Heart left ventricle (tissue), 16 donors: ENCODE measurements at regions of chr11 and their contacts with region 1.

Region 1: GRCh38 chr11:132028380-132029240 is 658.2 kb downstream of the NTM start:
- DNase-seq: peak in 1 of 5 donors; percentile 56
- ATAC-seq: peak in 1 of 4 donors; percentile 83
- H3K4me3 ChIP-seq: no peak overlapping the region
- H3K27ac ChIP-seq: no peak overlapping the region
- H3K4me1 ChIP-seq: peaks cover 0 to 11% (median 2%) of the 10 kb centered on the region in 12 donors
- H3K27me3 ChIP-seq: no peaks in the 10 kb centered on the region
- CTCF ChIP-seq: peak in 9 of 12 donors; percentile 23 to 63 (median 44)
- POLR2A ChIP-seq: no peak

Region 2: GRCh38 chr11:131724436-131724975 is 304.1 kb before region 1 on chr11:
- intact Hi-C with region 1: no loop called
- DNase-seq: no peak
- ATAC-seq: no peak
- H3K4me3 ChIP-seq: no peak overlapping the region
- H3K27ac ChIP-seq: no peak overlapping the region
- H3K4me1 ChIP-seq: no peaks in the 10 kb centered on the region
- H3K27me3 ChIP-seq: peaks cover 0 to 6% (median 0%) of the 10 kb centered on the region in 9 donors
- CTCF ChIP-seq: no peak
- POLR2A ChIP-seq: no peak

Region 3: DNA sequence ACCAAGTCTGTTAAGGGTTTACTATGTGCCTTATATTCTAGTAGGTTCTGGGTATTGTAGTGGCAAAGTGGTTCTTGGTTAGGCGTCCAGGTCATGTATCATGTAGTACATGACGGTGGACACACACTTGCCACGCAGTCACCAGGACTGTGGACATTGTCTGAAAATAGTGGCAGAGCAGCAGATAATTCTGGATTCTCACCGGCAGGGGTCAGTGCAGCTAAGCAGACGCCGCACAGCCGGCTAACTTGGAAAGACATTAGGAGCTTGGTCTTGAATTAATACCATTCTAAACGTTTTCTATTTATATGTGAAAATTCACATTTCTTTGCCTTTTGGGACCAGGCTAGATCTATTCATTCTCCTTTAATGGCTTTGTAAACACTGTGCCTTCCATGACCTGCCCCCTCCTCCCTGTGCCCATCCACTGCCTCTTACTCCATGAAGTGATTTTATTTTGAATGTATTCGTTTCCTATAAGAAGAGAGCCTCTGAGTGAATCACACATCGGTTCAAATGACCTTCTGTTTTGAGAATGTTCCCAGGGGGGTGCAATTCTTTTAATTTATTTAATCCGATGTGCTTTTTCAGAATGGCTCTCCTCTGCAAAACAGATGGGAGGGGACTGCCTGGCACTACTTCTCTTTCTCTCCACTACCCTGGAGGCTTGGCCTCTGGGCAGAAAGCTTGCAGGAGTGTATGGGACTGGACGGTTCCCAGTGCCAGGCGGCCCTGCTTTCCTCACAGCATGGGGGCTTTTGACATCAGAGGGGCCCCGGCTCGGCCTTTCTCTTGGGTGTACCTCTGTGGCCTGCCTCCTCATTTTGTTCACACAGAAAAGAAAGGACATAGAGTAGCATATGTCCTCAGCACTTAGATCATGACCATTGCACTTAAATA is 280.2 kb before region 1 on chr11:
- intact Hi-C with region 1: loop called in 1 of 10 experiments (anchors 5 kb)
- DNase-seq: peak in 3 of 5 donors; percentile 34 to 56 (median 45)
- ATAC-seq: peak in 3 of 4 donors; percentile 74 to 90 (median 75)
- H3K4me3 ChIP-seq: no peak overlapping the region
- H3K27ac ChIP-seq: no peak overlapping the region
- H3K4me1 ChIP-seq: peaks cover 0 to 14% (median 0%) of the 10 kb centered on the region in 12 donors
- H3K27me3 ChIP-seq: peaks cover 0 to 26% (median 0%) of the 10 kb centered on the region in 9 donors
- CTCF ChIP-seq: peak; percentile 58 to 85 (median 73)
- POLR2A ChIP-seq: no peak

Region 4: GRCh38 chr11:131874070-131874469 is 154.5 kb before region 1 on chr11:
- intact Hi-C with region 1: loop called in 4 of 10 experiments (anchors 2 to 10 kb)
- DNase-seq: no peak
- ATAC-seq: no peak
- H3K4me3 ChIP-seq: no peak overlapping the region
- H3K27ac ChIP-seq: no peak overlapping the region
- H3K4me1 ChIP-seq: no peaks in the 10 kb centered on the region
- H3K27me3 ChIP-seq: peaks cover 0 to 1% (median 0%) of the 10 kb centered on the region in 9 donors
- CTCF ChIP-seq: no peak
- POLR2A ChIP-seq: no peak

Region 5: GRCh38 chr11:131980888-131981668 is 47.5 kb before region 1 on chr11:
- intact Hi-C with region 1: no loop called
- DNase-seq: no peak
- ATAC-seq: no peak
- H3K4me3 ChIP-seq: no peak overlapping the region
- H3K27ac ChIP-seq: no peak overlapping the region
- H3K4me1 ChIP-seq: no peaks in the 10 kb centered on the region
- H3K27me3 ChIP-seq: peaks cover 0 to 8% (median 0%) of the 10 kb centered on the region in 9 donors
- CTCF ChIP-seq: no peak
- POLR2A ChIP-seq: no peak

Region 6: DNA sequence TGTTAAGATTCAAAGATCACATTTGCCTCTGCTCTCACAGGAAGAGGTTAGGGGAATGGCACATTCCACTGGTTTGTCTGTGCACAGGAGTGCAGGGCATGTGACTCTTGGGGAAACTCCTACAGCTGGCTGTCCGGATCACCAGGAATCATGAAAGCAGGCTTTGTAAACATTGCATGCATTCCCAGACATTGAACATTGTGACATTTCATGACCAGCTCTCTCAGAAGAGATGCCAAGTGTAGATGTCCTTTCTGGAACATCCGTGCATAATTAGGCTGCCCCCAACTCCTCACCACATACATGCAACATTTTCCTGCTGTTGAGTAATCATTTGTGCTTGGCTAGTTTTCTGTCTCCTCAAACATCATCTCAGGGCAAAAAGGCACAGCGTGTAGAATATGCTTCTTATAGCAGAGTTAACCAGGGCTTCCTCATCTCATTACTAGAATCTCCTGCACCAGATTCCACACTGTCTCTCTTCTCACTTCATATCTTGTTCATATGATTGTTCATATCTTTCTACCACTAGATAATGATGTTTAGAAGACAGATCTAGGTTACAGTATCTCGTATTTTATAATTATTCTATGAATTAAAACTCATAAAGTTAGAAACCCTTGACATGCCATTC is 36.5 kb after region 1 on chr11:
- intact Hi-C with region 1: no loop called
- DNase-seq: no peak
- ATAC-seq: peak in 2 of 4 donors; percentile 42 to 53
- H3K4me3 ChIP-seq: no peak overlapping the region
- H3K27ac ChIP-seq: no peak overlapping the region
- H3K4me1 ChIP-seq: no peaks in the 10 kb centered on the region
- H3K27me3 ChIP-seq: no peaks in the 10 kb centered on the region
- CTCF ChIP-seq: no peak
- POLR2A ChIP-seq: no peak